ENCODE measurements at regions of chr15 and their contacts with region 1.

Region 1: DNA sequence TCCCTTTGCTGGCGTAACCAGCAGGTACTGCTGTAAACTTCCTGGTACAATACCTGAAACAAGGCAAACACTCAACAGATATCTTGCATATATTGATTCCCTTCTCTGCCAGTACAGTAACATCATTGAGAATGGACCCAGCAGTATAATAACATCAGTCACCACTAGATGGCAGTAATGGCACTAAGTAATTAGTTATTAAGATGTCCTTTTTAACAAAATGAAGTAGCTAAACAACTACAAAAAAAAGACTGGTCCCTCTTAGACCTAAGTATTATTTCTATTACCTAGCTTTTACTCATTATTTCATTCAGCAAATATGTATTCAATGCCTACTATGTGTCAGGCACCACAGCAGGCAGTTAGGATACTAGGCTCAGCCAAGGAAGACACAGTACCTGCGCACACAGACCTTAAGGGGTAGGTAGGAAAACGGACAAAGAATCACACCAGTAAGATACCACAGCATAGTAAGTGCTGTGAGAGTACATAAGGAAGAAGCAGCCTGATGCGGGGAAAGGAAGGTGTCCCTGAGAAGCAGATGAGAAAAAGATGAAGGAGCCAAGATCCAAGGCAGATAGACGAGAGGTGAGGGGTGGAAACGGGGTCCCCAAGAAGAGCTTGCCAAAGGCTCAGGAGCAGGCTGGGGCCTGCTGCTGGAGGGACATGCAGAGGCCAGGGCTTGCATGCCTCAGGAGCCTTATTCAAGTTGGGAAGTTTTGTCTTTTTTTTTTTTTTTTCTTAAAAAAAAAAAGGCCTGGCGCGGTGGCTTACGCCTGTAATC is 102.8 kb upstream of the CHD2 start:
- DNase-seq: peak in 1 of 2 experiments; percentile 71
- H3K4me3 ChIP-seq: no peak overlapping the region
- H3K27ac ChIP-seq: peak overlapping the region; percentile 38; the same call in 1 of the 2 replicates
- H3K4me1 ChIP-seq: peaks cover 23% of the 10 kb centered on the region; the same call in 1 of the 2 replicates
- H3K27me3 ChIP-seq: no peaks in the 10 kb centered on the region
- CTCF ChIP-seq: peak; percentile 82

Region 2: GRCh38 chr15:92917606-92918407 is 120.4 kb after region 1 on chr15:
- CTCF ChIA-PET with region 1: interaction called, 10 read pairs
- POLR2A ChIA-PET with region 1: interaction called, 3 read pairs
- intact Hi-C with region 1: loop called (anchors 1 kb)
- DNase-seq: peak; percentile 88 to 94
- H3K4me3 ChIP-seq: peak overlapping the region; percentile 42; the same call in 1 of the 2 replicates
- H3K27ac ChIP-seq: peak overlapping the region; percentile 97
- H3K4me1 ChIP-seq: peaks cover 97% of the 10 kb centered on the region
- H3K27me3 ChIP-seq: no peaks in the 10 kb centered on the region
- CTCF ChIP-seq: peak; percentile 91

Region 3: GRCh38 chr15:93018580-93018979 is 221.2 kb after region 1 on chr15:
- CTCF ChIA-PET with region 1: no interaction called
- POLR2A ChIA-PET with region 1: no interaction called
- intact Hi-C with region 1: loop called (anchors 10 kb)
- DNase-seq: no peak
- H3K4me3 ChIP-seq: no peak overlapping the region
- H3K27ac ChIP-seq: 0 out of 2 replicates have a peak overlapping the region, but pooled peaks have one; percentile 29
- H3K4me1 ChIP-seq: no peaks in the 10 kb centered on the region
- H3K27me3 ChIP-seq: no peaks in the 10 kb centered on the region
- CTCF ChIP-seq: no peak

Region 4: GRCh38 chr15:93072411-93073394 is 275.3 kb after region 1 on chr15:
- CTCF ChIA-PET with region 1: interaction called, 18 read pairs
- POLR2A ChIA-PET with region 1: no interaction called
- intact Hi-C with region 1: loop called (anchors 5 kb)
- DNase-seq: peak; percentile 60 to 84
- H3K4me3 ChIP-seq: peak overlapping the region; percentile 79
- H3K27ac ChIP-seq: no peak overlapping the region
- H3K4me1 ChIP-seq: peaks cover 9% of the 10 kb centered on the region
- H3K27me3 ChIP-seq: peaks cover 19% of the 10 kb centered on the region
- CTCF ChIP-seq: no peak